Right cardiac atrium (tissue), 5 donors: ENCODE measurements at regions of chr16 and their contacts with region 1.

Region 1: GRCh38 chr16:19502395-19503131 is 19.3 kb downstream of the GDE1 start:
- DNase-seq: peak in 2 of 3 donors; percentile 76 to 84
- ATAC-seq: peak; percentile 60 to 68
- H3K4me3 ChIP-seq: no peak overlapping the region
- H3K27ac ChIP-seq: no peak overlapping the region
- H3K4me1 ChIP-seq: no peaks in the 10 kb centered on the region
- H3K27me3 ChIP-seq: no peaks in the 10 kb centered on the region

Region 2: GRCh38 chr16:19094541-19095365 is 407.8 kb before region 1 on chr16:
- intact Hi-C with region 1: loop called (anchors 5 to 10 kb)
- DNase-seq: no peak
- ATAC-seq: no peak
- H3K4me3 ChIP-seq: no peak overlapping the region
- H3K27ac ChIP-seq: no peak overlapping the region
- H3K4me1 ChIP-seq: no peaks in the 10 kb centered on the region
- H3K27me3 ChIP-seq: no peaks in the 10 kb centered on the region

Region 3: GRCh38 chr16:19316846-19317245 is 185.7 kb before region 1 on chr16:
- intact Hi-C with region 1: no loop called
- DNase-seq: no peak
- ATAC-seq: no peak
- H3K4me3 ChIP-seq: no peak overlapping the region
- H3K27ac ChIP-seq: no peak overlapping the region
- H3K4me1 ChIP-seq: no peaks in the 10 kb centered on the region
- H3K27me3 ChIP-seq: no peaks in the 10 kb centered on the region